Activated CD8-positive, alpha-beta T cell treated with anti-CD3 and anti-CD28 coated beads for 36 hours (primary cell): ENCODE measurements at regions of chr6 and their contacts with region 1.

Region 1: GRCh38 chr6:28809947-28810658 is 113.7 kb downstream of the TRIM27 start:
- DNase-seq: no peak
- ATAC-seq: no peak
- H3K4me3 Mint-ChIP-seq: peak overlapping the region; percentile 1
- H3K27ac Mint-ChIP-seq: no peak overlapping the region
- H3K4me1 Mint-ChIP-seq: peaks cover 15% of the 10 kb centered on the region
- H3K27me3 Mint-ChIP-seq: peaks cover 78% of the 10 kb centered on the region
- CTCF ChIP-seq: no peak

Region 2: GRCh38 chr6:28769626-28770402 is 40.3 kb before region 1 on chr6:
- CTCF ChIA-PET with region 1: no interaction called
- POLR2A ChIA-PET with region 1: no interaction called
- intact Hi-C with region 1: loop called (anchors 5 kb)
- DNase-seq: no peak
- ATAC-seq: no peak
- H3K4me3 Mint-ChIP-seq: no peak overlapping the region
- H3K27ac Mint-ChIP-seq: no peak overlapping the region
- H3K4me1 Mint-ChIP-seq: peaks cover 5% of the 10 kb centered on the region
- H3K27me3 Mint-ChIP-seq: peaks cover 96% of the 10 kb centered on the region
- CTCF ChIP-seq: no peak